ENCODE measurements at regions of chr1 and their contacts with region 1.

Region 1: GRCh38 chr1:243471754-243472745 is 216.2 kb downstream of the SDCCAG8 start:
- DNase-seq: no peak
- ATAC-seq: no peak
- H3K4me3 ChIP-seq: no peak overlapping the region
- H3K4me3 Mint-ChIP-seq: no peak overlapping the region
- H3K27ac ChIP-seq: no peak overlapping the region
- H3K27ac Mint-ChIP-seq: no peak overlapping the region
- H3K4me1 ChIP-seq: no peaks in the 10 kb centered on the region
- H3K4me1 Mint-ChIP-seq: peaks cover 8 to 11% of the 10 kb centered on the region in 2 donors
- H3K27me3 ChIP-seq: no peaks in the 10 kb centered on the region
- H3K27me3 Mint-ChIP-seq: no peaks in the 10 kb centered on the region
- CTCF ChIP-seq: no peak

Region 2: GRCh38 chr1:243482141-243483022 is 10.3 kb after region 1 on chr1:
- intact Hi-C with region 1: no loop called
- DNase-seq: no peak
- ATAC-seq: peak in 2 of 3 donors; percentile 42 to 50
- H3K4me3 ChIP-seq: peak overlapping the region; percentile 42
- H3K4me3 Mint-ChIP-seq: peak overlapping the region; percentile 90
- H3K27ac ChIP-seq: no peak overlapping the region
- H3K27ac Mint-ChIP-seq: peak overlapping the region in 1 of 2 donors; percentile 75
- H3K4me1 ChIP-seq: peaks cover 15% of the 10 kb centered on the region
- H3K4me1 Mint-ChIP-seq: peaks cover 8 to 24% of the 10 kb centered on the region in 2 donors
- H3K27me3 ChIP-seq: no peaks in the 10 kb centered on the region
- H3K27me3 Mint-ChIP-seq: no peaks in the 10 kb centered on the region
- CTCF ChIP-seq: no peak

Region 3: GRCh38 chr1:243748706-243749283 is 276.7 kb after region 1 on chr1:
- intact Hi-C with region 1: loop called (anchors 2 kb)
- DNase-seq: peak in 1 of 2 donors; percentile 79
- ATAC-seq: peak; percentile 94 to 100 (median 100)
- H3K4me3 ChIP-seq: no peak overlapping the region
- H3K4me3 Mint-ChIP-seq: no peak overlapping the region
- H3K27ac ChIP-seq: no peak overlapping the region
- H3K27ac Mint-ChIP-seq: peak overlapping the region in 1 of 2 donors; percentile 58
- H3K4me1 ChIP-seq: no peaks in the 10 kb centered on the region
- H3K4me1 Mint-ChIP-seq: peaks cover 13 to 23% of the 10 kb centered on the region in 2 donors
- H3K27me3 ChIP-seq: no peaks in the 10 kb centered on the region
- H3K27me3 Mint-ChIP-seq: no peaks in the 10 kb centered on the region
- CTCF ChIP-seq: peak; percentile 76

Region 4: DNA sequence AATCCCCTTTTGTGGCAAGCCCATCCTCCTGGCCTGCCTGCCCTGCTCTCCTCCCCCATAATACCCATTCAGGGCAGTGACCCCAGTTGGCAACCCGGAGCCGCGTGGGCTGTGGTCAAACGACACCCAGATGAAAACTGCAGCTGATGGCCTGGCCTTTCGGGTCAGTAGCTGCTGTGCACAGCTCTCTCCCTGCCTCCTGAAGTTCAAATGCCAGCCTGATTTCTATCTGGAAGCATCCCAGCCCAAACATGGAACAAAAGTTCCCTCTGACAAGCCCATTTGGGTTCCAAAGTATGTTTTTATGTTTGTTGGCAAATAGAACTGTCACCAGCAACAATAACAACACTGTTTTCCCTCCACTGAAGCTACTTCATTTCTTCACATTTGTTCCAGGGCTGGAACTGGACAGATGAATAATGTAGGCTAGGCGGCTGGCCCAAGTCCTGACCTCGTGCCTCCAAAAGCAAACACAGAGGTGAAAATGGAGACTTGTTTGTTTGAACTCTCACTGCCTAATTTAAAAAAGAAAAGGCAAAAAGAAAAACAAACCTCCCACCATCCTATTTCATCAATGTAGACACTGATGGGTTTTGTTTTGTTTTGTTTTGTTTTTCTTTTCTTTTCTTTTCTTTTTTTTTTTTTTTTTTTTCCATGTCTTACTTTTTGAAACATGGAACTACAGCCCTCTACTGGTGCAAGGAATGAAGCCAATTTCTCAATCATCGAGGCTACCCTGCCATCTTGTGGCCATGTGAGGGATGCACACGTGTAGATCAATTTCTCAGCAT is 800.6 kb after region 1 on chr1:
- intact Hi-C with region 1: loop called (anchors 10 kb)
- DNase-seq: peak; percentile 61 to 90
- ATAC-seq: peak; percentile 94 to 100 (median 99)
- H3K4me3 ChIP-seq: no peak overlapping the region
- H3K4me3 Mint-ChIP-seq: no peak overlapping the region
- H3K27ac ChIP-seq: no peak overlapping the region
- H3K27ac Mint-ChIP-seq: peak overlapping the region in 1 of 2 donors; percentile 4
- H3K4me1 ChIP-seq: peaks cover 7% of the 10 kb centered on the region
- H3K4me1 Mint-ChIP-seq: peaks cover 6 to 30% of the 10 kb centered on the region in 2 donors
- H3K27me3 ChIP-seq: no peaks in the 10 kb centered on the region
- H3K27me3 Mint-ChIP-seq: peaks cover 0 to 4% of the 10 kb centered on the region in 2 donors
- CTCF ChIP-seq: peak; percentile 99